Sigmoid colon (tissue), 7 donors: ENCODE measurements at regions of chr2 and their contacts with region 1.

Region 1: GRCh38 chr2:45494269-45494977 is 116.6 kb downstream of the SRBD1 start:
- DNase-seq: no peak
- H3K4me3 ChIP-seq: no peak overlapping the region
- H3K27ac ChIP-seq: no peak overlapping the region
- H3K4me1 ChIP-seq: no peaks in the 10 kb centered on the region
- H3K27me3 ChIP-seq: no peaks in the 10 kb centered on the region
- CTCF ChIP-seq: peak; percentile 49 to 73 (median 59)
- EP300 ChIP-seq: no peak
- POLR2A ChIP-seq: no peak

Region 2: GRCh38 chr2:44983836-44984604 is 510.4 kb before region 1 on chr2:
- intact Hi-C with region 1: loop called (anchors 1 kb)
- DNase-seq: no peak
- H3K4me3 ChIP-seq: no peak overlapping the region
- H3K27ac ChIP-seq: no peak overlapping the region
- H3K4me1 ChIP-seq: no peaks in the 10 kb centered on the region
- H3K27me3 ChIP-seq: peaks cover 0 to 14% (median 0%) of the 10 kb centered on the region in 3 donors
- CTCF ChIP-seq: no peak
- EP300 ChIP-seq: no peak
- POLR2A ChIP-seq: no peak